Right cardiac atrium (tissue), 5 donors: ENCODE measurements at regions of chr3 and their contacts with region 1.

Region 1: GRCh38 chr3:49358217-49358883 is at the start of gene GPX1:
- DNase-seq: peak; percentile 97 to 99 (median 98)
- ATAC-seq: peak; percentile 96 to 97
- H3K4me3 ChIP-seq: peak within 1 kb of the TSS; percentile 68
- H3K27ac ChIP-seq: peak within 1 kb of the TSS; percentile 93
- H3K4me1 ChIP-seq: peaks cover 4% of the 10 kb centered on the region
- H3K27me3 ChIP-seq: no peaks in the 10 kb centered on the region
- total RNA-seq, gene GPX1: 153 to 254 (median 196) TPM

Region 2: DNA sequence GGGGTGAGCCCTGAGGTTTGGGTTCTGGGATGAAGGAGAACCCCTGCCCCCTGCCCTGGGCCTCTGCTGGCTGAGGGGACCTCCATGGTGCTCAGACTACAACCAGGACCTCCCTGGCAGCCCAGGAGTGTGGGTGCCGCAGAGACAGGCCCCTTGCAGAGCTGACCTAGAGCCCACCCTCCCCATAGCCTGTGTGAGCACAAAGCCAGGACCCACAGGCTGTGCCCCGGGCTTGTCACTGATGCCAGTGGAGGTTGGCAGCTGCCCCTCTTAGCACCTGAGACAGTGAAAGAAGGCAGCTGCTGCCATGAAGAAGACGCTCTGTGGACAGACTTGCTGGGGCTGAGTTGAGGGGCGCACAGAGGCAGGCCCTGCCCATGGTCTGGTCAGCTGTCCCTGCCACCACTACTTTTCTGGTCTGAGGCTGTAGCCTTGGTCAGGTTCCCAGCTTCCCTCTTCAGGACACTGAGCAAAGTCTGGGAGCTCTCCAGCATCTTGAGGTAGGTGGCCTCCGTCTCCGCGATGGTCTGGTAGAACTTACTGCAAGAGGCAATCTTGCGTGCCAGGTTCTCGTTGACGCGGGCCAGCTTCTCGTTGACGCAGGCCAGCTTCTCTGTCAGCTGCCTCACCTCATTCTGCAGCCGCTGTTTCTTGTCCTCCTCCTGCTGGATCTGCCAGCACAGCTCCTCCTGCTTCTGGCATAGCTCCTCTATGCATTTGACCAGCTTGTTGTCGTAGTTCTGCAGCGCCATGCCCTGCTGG is 41.5 kb before region 1 on chr3:
- intact Hi-C with region 1: no loop called
- DNase-seq: peak in 1 of 3 donors; percentile 24
- ATAC-seq: peak in 1 of 2 donors; percentile 29
- H3K4me3 ChIP-seq: no peak overlapping the region
- H3K27ac ChIP-seq: no peak overlapping the region
- H3K4me1 ChIP-seq: no peaks in the 10 kb centered on the region
- H3K27me3 ChIP-seq: no peaks in the 10 kb centered on the region

Region 3: GRCh38 chr3:49406571-49407566 is 48.5 kb after region 1 on chr3:
- intact Hi-C with region 1: loop called in 2 of 4 experiments (anchors 5 to 10 kb)
- DNase-seq: peak in 1 of 3 donors; percentile 43
- ATAC-seq: no peak
- H3K4me3 ChIP-seq: no peak overlapping the region
- H3K27ac ChIP-seq: peak overlapping the region; percentile 52
- H3K4me1 ChIP-seq: peaks cover 13% of the 10 kb centered on the region
- H3K27me3 ChIP-seq: no peaks in the 10 kb centered on the region

Region 4: DNA sequence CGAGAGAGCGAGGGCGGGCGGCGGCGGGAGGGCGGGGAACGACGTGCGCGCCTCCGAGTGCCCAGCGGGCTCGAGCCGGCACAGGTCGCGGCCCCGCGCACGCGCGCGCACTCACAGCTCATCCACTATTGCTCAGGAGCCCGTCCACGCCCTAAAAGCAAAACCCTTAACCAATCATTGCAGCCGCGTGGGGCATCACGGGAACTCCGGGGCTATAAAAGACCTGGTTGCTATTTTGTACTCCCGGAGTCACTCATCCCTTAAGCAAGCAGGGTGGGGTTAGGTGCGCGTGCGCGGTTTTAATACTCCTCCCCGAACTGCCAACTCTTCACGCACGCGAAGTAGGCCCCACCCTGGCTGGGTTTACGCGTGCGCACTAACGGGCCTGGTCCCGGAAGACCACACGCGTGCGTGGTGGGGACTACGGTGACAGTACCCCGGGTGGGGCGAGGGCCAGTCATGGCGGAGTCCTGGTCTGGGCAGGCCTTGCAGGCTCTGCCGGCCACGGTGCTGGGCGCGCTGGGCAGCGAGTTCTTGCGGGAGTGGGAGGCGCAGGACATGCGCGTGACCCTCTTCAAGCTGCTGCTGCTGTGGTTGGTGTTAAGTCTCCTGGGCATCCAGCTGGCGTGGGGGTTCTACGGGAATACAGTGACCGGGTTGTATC is 53.8 kb after region 1 on chr3 and contains the starts of genes RHOA and TCTA:
- intact Hi-C with region 1: loop called in 2 of 4 experiments (anchors 5 to 10 kb)
- DNase-seq: peak; percentile 100
- ATAC-seq: peak; percentile 96 to 97
- H3K4me3 ChIP-seq: peak within 1 kb of the TSS; percentile 99
- H3K27ac ChIP-seq: peak within 1 kb of the TSS; percentile 98
- H3K4me1 ChIP-seq: peaks cover 23% of the 10 kb centered on the region
- H3K27me3 ChIP-seq: no peaks in the 10 kb centered on the region
- total RNA-seq, gene RHOA: 217 to 310 (median 265) TPM
- total RNA-seq, gene TCTA: 15.5 to 21.4 (median 19.0) TPM

Region 5: DNA sequence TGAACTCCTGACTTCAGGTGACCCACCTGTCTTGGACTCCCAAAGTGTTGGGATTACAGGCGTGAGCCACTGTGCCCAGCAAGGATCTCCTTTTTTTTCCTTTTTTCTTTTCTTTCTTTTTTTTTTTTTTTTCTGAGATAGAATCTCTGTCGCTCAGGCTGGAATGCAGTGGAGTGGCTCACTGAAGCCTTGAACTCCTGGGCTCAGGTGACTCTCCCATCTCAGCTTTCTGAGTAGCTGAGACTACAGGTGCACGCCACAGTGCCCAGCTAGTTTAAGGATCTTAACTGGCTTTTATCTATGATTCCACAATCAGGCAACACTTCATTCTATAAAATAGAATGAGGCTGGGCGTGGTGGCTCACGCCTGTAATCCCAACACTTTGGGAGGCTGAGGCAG is 87.0 kb after region 1 on chr3:
- intact Hi-C with region 1: no loop called
- DNase-seq: no peak
- ATAC-seq: no peak
- H3K4me3 ChIP-seq: no peak overlapping the region
- H3K27ac ChIP-seq: no peak overlapping the region
- H3K4me1 ChIP-seq: peaks cover 1% of the 10 kb centered on the region
- H3K27me3 ChIP-seq: no peaks in the 10 kb centered on the region

Region 6: GRCh38 chr3:49461443-49462171 is 103.3 kb after region 1 on chr3:
- intact Hi-C with region 1: no loop called
- DNase-seq: no peak
- ATAC-seq: no peak
- H3K4me3 ChIP-seq: no peak overlapping the region
- H3K27ac ChIP-seq: peak overlapping the region; percentile 54
- H3K4me1 ChIP-seq: peaks cover 15% of the 10 kb centered on the region
- H3K27me3 ChIP-seq: no peaks in the 10 kb centered on the region